ENCODE measurements at regions of chr12 and their contacts with region 1.

Region 1: DNA sequence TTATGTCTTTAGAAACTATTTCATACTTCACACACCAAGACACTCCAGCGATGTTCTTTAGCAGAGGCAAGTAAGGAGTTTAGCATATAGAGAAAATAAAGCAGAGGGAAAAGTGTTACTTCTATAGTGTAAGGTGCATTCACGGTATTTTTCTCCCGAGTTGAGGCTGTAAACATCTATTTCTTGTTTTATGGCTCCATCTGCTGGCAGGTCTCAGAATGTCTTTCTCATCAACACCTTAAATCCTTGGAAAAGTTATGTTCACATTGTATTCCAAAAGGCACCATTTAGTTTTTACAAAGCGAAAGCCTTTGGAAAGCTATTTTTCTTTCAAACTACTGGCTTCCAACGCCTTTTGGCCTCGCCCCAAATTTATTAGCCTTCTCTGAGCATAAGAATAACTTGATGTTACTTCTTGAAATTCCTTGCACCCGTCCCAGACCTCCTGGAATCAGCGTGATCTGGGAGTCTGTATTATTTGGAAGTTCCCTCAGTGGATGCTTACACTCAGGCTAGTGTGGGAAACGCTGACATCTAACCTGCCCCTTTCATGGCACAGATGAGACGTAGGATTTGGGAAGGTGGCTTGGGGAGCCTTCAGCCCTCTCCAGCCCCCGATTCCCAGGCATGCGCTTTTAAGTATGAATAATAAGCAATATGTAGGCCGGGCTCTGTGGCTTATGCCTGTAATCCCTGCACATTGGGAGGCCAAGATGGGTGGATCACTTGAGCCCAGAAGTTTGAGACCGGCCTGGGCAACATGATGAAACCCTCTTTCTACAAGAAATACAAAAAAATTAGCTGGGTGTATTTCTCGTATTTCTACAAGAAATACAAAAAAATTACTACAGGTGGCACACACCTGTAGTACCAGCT is 1.9 kb upstream of the PIWIL1 start:
- DNase-seq: peak; percentile 16
- H3K4me3 ChIP-seq: no peak overlapping the region
- H3K27ac ChIP-seq: no peak overlapping the region
- H3K4me1 ChIP-seq: no peaks in the 10 kb centered on the region
- H3K27me3 ChIP-seq: no peaks in the 10 kb centered on the region
- CTCF ChIP-seq: peak; percentile 48 to 61

Region 2: DNA sequence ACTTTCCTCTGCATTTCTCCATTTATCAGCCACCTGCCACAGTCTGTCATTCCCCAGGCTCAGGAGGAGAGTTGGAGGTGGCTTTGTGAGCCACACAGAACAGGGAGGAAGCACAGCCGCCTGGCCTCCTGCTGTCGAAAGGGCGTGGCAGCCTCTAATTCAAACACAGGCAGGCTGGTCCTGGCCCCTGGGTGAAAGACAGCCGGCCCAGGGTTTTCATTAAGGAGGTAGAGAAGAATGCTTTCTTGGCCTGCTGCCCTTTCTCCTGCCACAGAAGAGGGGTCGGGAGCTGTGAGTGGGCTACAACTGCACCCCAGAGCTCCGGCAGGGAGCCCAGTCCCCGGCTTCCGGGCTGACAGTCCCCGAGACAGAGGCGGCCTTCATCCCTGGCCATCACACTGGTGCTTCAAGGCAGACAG is 282.1 kb before region 1 on chr12:
- CTCF ChIA-PET with region 1: no interaction called
- dilution Hi-C with region 1: no loop called
- in situ Hi-C with region 1: loop called in 1 of 2 experiments (anchors 10 kb)
- intact Hi-C with region 1: no loop called
- DNase-seq: no peak
- H3K4me3 ChIP-seq: no peak overlapping the region
- H3K27ac ChIP-seq: no peak overlapping the region
- H3K4me1 ChIP-seq: no peaks in the 10 kb centered on the region
- H3K27me3 ChIP-seq: no peaks in the 10 kb centered on the region
- CTCF ChIP-seq: no peak

Measured in mammary epithelial cell (primary cell).